T-cell (primary cell): ENCODE measurements at regions of chr7 and their contacts with region 1.

Region 1: GRCh38 chr7:44606450-44607254 is at the start of gene OGDH:
- DNase-seq: peak; percentile 97 to 100 (median 99)
- ATAC-seq: peak; percentile 93 to 98 (median 96)
- H3K4me3 ChIP-seq: peak within 1 kb of the TSS; percentile 85 to 86
- H3K4me3 Mint-ChIP-seq: peak within 1 kb of the TSS; percentile 85 to 98 (median 97)
- H3K27ac ChIP-seq: peak within 1 kb of the TSS; percentile 92
- H3K27ac Mint-ChIP-seq: peak within 1 kb of the TSS; percentile 98 to 99
- H3K4me1 ChIP-seq: peaks cover 12 to 38% of the 10 kb centered on the region in 2 experiments
- H3K4me1 Mint-ChIP-seq: peaks cover 39 to 49% (median 49%) of the 10 kb centered on the region in 3 donors
- H3K27me3 ChIP-seq: no peaks in the 10 kb centered on the region
- H3K27me3 Mint-ChIP-seq: no peaks in the 10 kb centered on the region
- total RNA-seq, gene OGDH: 58.9 to 113 (median 108) TPM

Region 2: GRCh38 chr7:44581879-44582603 is 24.6 kb before region 1 on chr7 and contains the start of gene TMED4:
- CTCF ChIA-PET with region 1: interaction called in 1 of 2 experiments, 4 read pairs
- POLR2A ChIA-PET with region 1: interaction called in 1 of 2 experiments, 15 read pairs
- DNase-seq: peak; percentile 100
- ATAC-seq: peak; percentile 84 to 90 (median 87)
- H3K4me3 ChIP-seq: peak within 1 kb of the TSS; percentile 64 to 70
- H3K4me3 Mint-ChIP-seq: peak within 1 kb of the TSS; percentile 90
- H3K27ac ChIP-seq: peak within 1 kb of the TSS; percentile 89
- H3K27ac Mint-ChIP-seq: peak within 1 kb of the TSS; percentile 95 to 97
- H3K4me1 ChIP-seq: peaks cover 10 to 28% of the 10 kb centered on the region in 2 experiments
- H3K4me1 Mint-ChIP-seq: peaks cover 31 to 42% (median 40%) of the 10 kb centered on the region in 3 donors
- H3K27me3 ChIP-seq: no peaks in the 10 kb centered on the region
- H3K27me3 Mint-ChIP-seq: no peaks in the 10 kb centered on the region
- total RNA-seq, gene TMED4: 84.5 to 106 (median 93.1) TPM

Region 3: GRCh38 chr7:44625526-44626471 is 19.1 kb after region 1 on chr7:
- CTCF ChIA-PET with region 1: interaction called in 1 of 2 experiments, 8 read pairs
- POLR2A ChIA-PET with region 1: interaction called in 1 of 2 experiments, 20 read pairs
- DNase-seq: no peak
- ATAC-seq: no peak
- H3K4me3 ChIP-seq: no peak overlapping the region
- H3K4me3 Mint-ChIP-seq: peak overlapping the region in 2 of 3 donors; percentile 51 to 57
- H3K27ac ChIP-seq: peak overlapping the region; percentile 70
- H3K27ac Mint-ChIP-seq: peak overlapping the region; percentile 93 to 94
- H3K4me1 ChIP-seq: peaks cover under 1 to 80% of the 10 kb centered on the region in 2 experiments
- H3K4me1 Mint-ChIP-seq: peaks cover 74 to 84% (median 76%) of the 10 kb centered on the region in 3 donors
- H3K27me3 ChIP-seq: no peaks in the 10 kb centered on the region
- H3K27me3 Mint-ChIP-seq: no peaks in the 10 kb centered on the region

Region 4: GRCh38 chr7:44633254-44634186 is 26.9 kb after region 1 on chr7:
- CTCF ChIA-PET with region 1: interaction called in 1 of 2 experiments, 14 read pairs
- POLR2A ChIA-PET with region 1: interaction called, 3 to 26 read pairs
- DNase-seq: peak in 33 of 35 experiments; percentile 27 to 84 (median 48)
- ATAC-seq: peak; percentile 42 to 56 (median 50)
- H3K4me3 ChIP-seq: no peak overlapping the region
- H3K4me3 Mint-ChIP-seq: peak overlapping the region in 2 of 3 donors; percentile 10 to 57
- H3K27ac ChIP-seq: peak overlapping the region; percentile 99
- H3K27ac Mint-ChIP-seq: peak overlapping the region; percentile 98 to 100
- H3K4me1 ChIP-seq: peaks cover 24 to 100% of the 10 kb centered on the region in 2 experiments
- H3K4me1 Mint-ChIP-seq: peaks cover 74 to 95% (median 89%) of the 10 kb centered on the region in 3 donors
- H3K27me3 ChIP-seq: no peaks in the 10 kb centered on the region
- H3K27me3 Mint-ChIP-seq: no peaks in the 10 kb centered on the region

Region 5: DNA sequence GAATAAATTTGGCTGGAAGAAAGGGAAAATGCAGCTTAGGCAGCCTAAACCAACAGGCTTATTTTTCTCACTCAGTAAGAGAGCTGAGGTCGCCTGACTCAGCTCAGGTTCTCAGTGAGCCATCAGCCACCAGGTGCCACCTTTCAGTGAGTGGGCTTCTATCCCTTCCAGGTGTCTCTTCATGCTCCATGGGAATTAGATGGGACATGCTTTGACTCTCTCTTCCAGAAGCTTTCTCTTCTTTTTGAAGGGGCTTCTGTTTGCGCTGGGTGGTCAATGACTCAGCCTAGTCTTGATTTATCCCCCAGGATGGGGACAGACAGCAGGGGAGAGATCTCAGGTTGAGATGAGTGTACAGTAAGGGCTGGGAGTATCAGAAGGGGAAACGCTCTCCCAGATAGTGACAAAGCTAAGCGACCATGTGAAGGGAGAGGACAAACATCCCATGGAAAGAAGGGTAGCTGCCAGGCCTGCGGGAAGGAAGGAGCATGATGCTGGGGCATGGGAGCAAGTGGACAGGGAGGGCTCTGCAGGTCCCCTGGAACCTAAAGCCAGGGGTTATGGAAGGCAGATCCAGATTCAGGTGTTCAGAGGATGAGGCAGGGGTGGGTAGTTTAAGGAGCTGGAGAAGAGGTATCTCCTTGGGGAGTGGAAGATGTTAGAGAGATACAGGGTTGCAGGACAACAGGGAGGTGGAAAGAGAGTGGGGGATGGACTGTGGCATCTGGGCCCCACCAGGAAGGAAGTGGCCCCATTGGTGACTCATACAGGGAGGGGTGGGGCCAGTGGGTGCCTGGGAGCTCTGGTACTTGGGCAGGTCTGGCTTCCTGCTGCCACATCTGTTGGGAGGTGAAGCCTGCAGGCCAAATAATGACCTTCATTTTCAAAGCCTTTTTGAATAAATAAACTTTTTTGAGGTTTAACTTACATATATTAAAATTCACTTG is 32.2 kb after region 1 on chr7:
- CTCF ChIA-PET with region 1: interaction called in 1 of 2 experiments, 14 read pairs
- POLR2A ChIA-PET with region 1: interaction called, 3 to 26 read pairs
- DNase-seq: peak; percentile 56 to 83 (median 70)
- ATAC-seq: peak; percentile 66 to 89 (median 86)
- H3K4me3 ChIP-seq: no peak overlapping the region
- H3K4me3 Mint-ChIP-seq: peak overlapping the region; percentile 66 to 80 (median 69)
- H3K27ac ChIP-seq: peak overlapping the region; percentile 99
- H3K27ac Mint-ChIP-seq: peak overlapping the region; percentile 98 to 100
- H3K4me1 ChIP-seq: peaks cover 26 to 85% of the 10 kb centered on the region in 2 experiments
- H3K4me1 Mint-ChIP-seq: peaks cover 59 to 85% (median 82%) of the 10 kb centered on the region in 3 donors
- H3K27me3 ChIP-seq: no peaks in the 10 kb centered on the region
- H3K27me3 Mint-ChIP-seq: no peaks in the 10 kb centered on the region

Region 6: GRCh38 chr7:44797329-44798251 is 190.9 kb after region 1 on chr7:
- CTCF ChIA-PET with region 1: interaction called in 1 of 2 experiments, 4 read pairs
- POLR2A ChIA-PET with region 1: interaction called in 1 of 2 experiments, 10 read pairs
- DNase-seq: peak; percentile 63 to 88 (median 78)
- ATAC-seq: peak; percentile 47 to 59 (median 56)
- H3K4me3 ChIP-seq: peak overlapping the region; percentile 76 to 99
- H3K4me3 Mint-ChIP-seq: peak overlapping the region; percentile 87 to 95 (median 89)
- H3K27ac ChIP-seq: peak overlapping the region; percentile 99
- H3K27ac Mint-ChIP-seq: peak overlapping the region; percentile 93 to 95
- H3K4me1 ChIP-seq: peaks cover 17 to 25% of the 10 kb centered on the region in 2 experiments
- H3K4me1 Mint-ChIP-seq: peaks cover 26 to 42% (median 42%) of the 10 kb centered on the region in 3 donors
- H3K27me3 ChIP-seq: no peaks in the 10 kb centered on the region
- H3K27me3 Mint-ChIP-seq: no peaks in the 10 kb centered on the region